Activated CD4-positive, alpha-beta T cell treated with anti-CD3 and anti-CD28 coated beads, Interleukin-2, amount 10 ng/mL, durations not matched to agents 24 days and 14 days (primary cell): ENCODE measurements at regions of chr19 and their contacts with region 1.

Region 1: DNA sequence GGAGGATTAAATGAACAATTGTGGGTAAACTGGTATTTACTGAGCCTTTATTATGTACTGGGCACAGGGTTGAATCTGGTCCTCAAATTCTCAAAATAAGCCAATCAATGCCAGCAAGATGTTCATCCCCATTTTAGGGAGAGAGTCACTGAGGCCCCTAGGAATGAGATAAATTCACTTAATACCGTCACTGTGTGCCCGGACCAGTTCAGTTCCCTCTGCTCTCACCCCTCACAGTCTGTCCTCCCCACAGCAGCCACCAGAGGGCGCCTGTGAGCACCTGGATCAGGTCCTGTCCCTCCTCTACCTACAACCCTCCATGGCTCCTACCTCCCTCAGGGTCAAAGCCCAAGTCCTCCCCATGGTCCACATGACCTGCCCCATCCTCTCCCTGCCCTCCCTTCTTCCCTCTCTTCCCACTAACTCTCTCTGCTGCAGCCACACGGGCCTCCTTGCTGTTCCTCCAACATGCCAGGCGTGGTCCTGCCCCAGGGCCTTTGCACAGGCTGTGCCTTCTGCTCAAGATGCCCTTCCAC is 42.0 kb upstream of the NFIC start:
- DNase-seq: peak; percentile 92
- H3K4me3 Mint-ChIP-seq: no peak overlapping the region
- H3K27ac Mint-ChIP-seq: no peak overlapping the region
- H3K4me1 Mint-ChIP-seq: no peaks in the 10 kb centered on the region
- H3K27me3 Mint-ChIP-seq: no peaks in the 10 kb centered on the region

Region 2: GRCh38 chr19:3289971-3290569 is 34.3 kb before region 1 on chr19:
- intact Hi-C with region 1: no loop called
- DNase-seq: no peak
- H3K4me3 Mint-ChIP-seq: no peak overlapping the region
- H3K27ac Mint-ChIP-seq: no peak overlapping the region
- H3K4me1 Mint-ChIP-seq: peaks cover under 1% of the 10 kb centered on the region
- H3K27me3 Mint-ChIP-seq: peaks cover 5% of the 10 kb centered on the region

Region 3: DNA sequence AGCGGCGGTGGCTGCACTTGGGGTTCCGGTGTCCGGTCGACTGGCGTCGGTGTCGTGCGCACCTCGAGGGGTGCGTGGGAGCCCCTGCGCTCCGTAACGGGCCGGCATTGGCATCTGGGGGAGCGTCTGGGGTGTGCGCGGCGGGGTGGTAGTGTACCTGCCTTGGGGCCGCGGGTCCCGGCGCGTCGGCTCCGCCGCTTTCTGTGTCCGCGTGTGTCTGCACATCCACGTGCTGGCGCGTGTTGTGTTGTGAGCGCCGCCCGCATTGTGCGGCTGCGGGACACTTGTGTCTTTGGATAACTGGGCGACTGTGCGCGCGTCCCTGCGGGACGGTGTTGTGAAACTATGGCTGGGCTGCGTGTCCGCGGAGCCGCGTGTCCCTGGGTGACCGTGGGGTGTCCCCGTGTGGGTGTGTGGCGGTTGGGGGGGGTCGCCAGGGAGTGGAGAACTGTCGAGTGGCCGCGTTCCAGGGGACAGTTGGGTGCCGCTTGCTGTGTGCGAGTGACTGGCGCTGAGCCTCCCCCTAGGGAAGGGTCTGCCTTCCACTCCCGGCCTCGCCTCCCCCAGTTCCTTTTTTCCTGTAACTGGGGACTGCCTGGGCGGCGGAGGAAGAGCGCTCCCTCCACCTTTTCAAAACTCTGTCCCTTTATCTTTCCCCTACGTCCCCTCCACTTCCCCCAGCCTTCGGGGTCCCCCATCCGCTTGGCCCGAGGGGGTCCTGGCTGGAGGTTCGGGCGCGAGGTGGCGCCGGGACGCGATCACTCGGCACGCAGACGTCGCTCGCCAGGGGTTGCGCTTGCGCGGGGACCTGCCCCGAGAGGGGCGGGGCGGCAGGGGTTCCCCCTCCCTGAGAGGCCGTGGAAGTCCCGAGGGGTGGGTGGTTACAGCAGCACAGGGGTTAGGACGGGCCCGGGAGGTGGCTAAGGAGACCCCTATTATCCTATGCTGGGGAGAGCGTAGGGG is 36.3 kb after region 1 on chr19:
- intact Hi-C with region 1: no loop called
- DNase-seq: peak; percentile 90
- H3K4me3 Mint-ChIP-seq: peak overlapping the region; percentile 89
- H3K27ac Mint-ChIP-seq: peak overlapping the region; percentile 90
- H3K4me1 Mint-ChIP-seq: peaks cover 31% of the 10 kb centered on the region
- H3K27me3 Mint-ChIP-seq: peaks cover 48% of the 10 kb centered on the region

Region 4: GRCh38 chr19:3429581-3430080 is 105.2 kb after region 1 on chr19:
- intact Hi-C with region 1: loop called (anchors 1 kb)
- DNase-seq: peak; percentile 94
- H3K4me3 Mint-ChIP-seq: no peak overlapping the region
- H3K27ac Mint-ChIP-seq: no peak overlapping the region
- H3K4me1 Mint-ChIP-seq: peaks cover 9% of the 10 kb centered on the region
- H3K27me3 Mint-ChIP-seq: no peaks in the 10 kb centered on the region

Region 5: DNA sequence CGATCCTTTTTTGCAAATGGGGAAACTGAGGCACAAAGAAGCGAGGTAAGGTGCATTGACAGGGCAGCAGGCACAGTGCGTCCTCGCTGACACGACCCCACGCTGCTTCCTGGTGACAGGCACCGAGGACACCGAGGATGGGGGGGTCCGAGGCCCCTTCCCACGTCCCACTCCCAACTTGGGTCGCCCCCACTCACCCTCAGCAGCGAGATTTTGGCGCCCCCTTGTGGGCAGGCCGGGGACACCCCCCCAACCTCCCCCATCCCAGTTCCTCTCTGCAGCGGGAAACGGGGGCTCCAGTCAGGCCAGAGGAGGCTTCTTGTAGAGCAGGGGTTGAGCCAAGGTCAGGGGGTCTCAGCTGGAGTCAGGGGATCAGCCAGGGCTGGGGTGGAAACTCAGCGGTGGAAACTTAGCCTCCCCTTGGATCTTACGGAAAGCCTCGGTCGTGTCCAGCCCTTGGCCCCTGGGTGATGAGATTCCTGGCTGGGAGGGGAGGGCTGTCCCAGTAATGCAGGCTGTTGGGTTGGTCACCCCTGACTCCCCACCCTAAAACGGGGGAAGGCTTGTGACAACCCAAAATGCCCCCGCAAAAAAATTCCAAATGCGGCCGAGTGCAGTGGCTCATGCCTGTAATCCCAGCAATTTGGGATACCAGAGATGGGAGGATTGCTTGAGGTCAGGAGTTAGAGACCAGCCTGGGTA is 147.7 kb after region 1 on chr19:
- intact Hi-C with region 1: loop called (anchors 2 kb)
- DNase-seq: peak; percentile 79
- H3K4me3 Mint-ChIP-seq: no peak overlapping the region
- H3K27ac Mint-ChIP-seq: no peak overlapping the region
- H3K4me1 Mint-ChIP-seq: no peaks in the 10 kb centered on the region
- H3K27me3 Mint-ChIP-seq: peaks cover 2% of the 10 kb centered on the region